ENCODE measurements at regions of chr1 and their contacts with region 1.

Region 1: DNA sequence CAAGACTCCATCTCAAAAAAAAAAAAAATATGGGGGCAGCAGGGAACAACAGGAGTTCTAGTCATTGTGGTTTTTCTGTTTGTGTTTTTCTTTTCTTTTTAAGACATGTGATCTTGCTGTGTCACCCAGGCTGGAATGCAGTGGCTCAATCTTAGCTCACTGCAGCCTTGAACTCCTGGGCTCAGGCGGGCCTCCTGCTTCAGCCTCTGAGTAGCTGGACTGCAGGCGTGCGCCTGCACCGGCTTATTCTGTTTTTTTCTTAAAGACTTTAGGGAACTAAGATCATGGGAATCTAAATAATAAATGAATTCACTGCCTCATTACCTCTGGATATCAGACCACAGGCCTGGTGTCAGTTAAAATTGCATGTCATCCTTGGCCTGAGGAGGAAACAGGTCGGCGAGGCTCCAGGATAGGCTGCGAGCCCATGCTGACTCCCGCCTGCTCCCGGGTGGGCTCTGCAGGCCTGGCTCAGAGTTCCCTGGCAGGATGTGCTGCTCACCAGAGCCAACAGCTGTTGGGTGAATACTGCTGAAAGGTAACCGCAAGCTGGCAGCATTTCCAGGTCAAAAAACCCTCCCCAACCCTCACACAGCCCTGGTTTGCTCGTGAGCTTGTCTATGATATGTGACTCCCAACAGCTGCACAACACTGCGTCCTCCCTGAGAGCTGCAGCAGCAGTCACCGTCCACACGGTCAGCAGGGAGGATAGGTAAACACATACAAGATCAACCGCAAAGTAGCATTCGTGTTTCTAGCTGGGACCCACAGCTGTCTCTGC is 58.1 kb downstream of the SCCPDH start:
- DNase-seq: peak in 2 of 9 donors; percentile 4 to 20
- ATAC-seq: peak; percentile 52
- H3K4me3 ChIP-seq: no peak overlapping the region
- H3K4me3 Mint-ChIP-seq: peak overlapping the region in 8 of 10 donors; percentile 1 to 65 (median 34)
- H3K27ac ChIP-seq: no peak overlapping the region
- H3K27ac Mint-ChIP-seq: peak overlapping the region in 4 of 9 donors; percentile 15 to 71 (median 56)
- H3K4me1 ChIP-seq: peaks cover 0 to 6% of the 10 kb centered on the region in 2 donors
- H3K4me1 Mint-ChIP-seq: peaks cover 6 to 31% (median 22%) of the 10 kb centered on the region in 7 donors
- H3K27me3 ChIP-seq: no peaks in the 10 kb centered on the region
- H3K27me3 Mint-ChIP-seq: peaks cover 0 to 9% (median 0%) of the 10 kb centered on the region in 5 donors

Region 2: DNA sequence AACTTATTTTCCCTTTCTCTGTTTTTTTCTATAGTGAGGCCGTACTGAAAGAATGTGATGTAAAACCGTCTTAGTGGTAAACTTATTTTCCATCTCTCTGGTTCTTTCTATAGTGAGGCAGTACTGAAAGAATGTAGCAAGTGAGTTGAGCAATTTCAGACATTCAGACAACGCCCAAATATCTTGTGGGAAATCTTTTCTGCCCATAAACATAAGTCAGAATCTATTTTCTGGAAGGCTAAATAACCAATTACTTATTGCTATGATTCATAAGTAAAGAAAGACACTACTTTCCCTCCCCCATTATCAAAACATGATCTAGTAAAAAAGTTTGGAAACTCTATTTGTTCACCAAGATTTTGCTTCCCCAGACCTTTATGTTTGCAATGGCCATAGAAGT is 76.9 kb before region 1 on chr1:
- CTCF ChIA-PET with region 1: no interaction called
- POLR2A ChIA-PET with region 1: no interaction called
- intact Hi-C with region 1: loop called in 1 of 2 experiments (anchors 2 kb)
- DNase-seq: no peak
- ATAC-seq: no peak
- H3K4me3 ChIP-seq: no peak overlapping the region
- H3K4me3 Mint-ChIP-seq: no peak overlapping the region
- H3K27ac ChIP-seq: no peak overlapping the region
- H3K27ac Mint-ChIP-seq: no peak overlapping the region
- H3K4me1 ChIP-seq: no peaks in the 10 kb centered on the region
- H3K4me1 Mint-ChIP-seq: peaks cover 0 to 10% (median 3%) of the 10 kb centered on the region in 7 donors
- H3K27me3 ChIP-seq: no peaks in the 10 kb centered on the region
- H3K27me3 Mint-ChIP-seq: peaks cover 0 to 10% (median 5%) of the 10 kb centered on the region in 5 donors

Region 3: DNA sequence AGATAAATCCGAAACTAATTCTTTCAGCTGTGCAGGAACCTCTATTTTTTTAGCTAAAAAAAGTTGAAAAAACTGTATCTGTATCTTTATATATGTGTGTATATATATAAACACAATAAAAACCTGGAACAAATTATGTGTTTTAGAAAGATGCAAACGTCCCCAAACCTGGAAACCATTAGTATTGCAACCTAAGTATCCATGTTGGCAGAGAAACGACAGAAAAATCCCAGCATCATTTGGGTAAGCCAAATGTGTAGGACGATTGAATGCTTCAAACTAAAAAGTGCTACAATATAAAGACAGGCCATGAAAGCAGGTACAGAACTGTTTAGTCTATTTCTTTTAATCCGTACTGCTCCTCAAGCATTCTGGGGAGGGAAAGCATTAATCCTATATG is 61.6 kb after region 1 on chr1:
- CTCF ChIA-PET with region 1: no interaction called
- POLR2A ChIA-PET with region 1: no interaction called
- intact Hi-C with region 1: loop called in 1 of 2 experiments (anchors 10 kb)
- DNase-seq: no peak
- ATAC-seq: no peak
- H3K4me3 ChIP-seq: no peak overlapping the region
- H3K4me3 Mint-ChIP-seq: no peak overlapping the region
- H3K27ac ChIP-seq: no peak overlapping the region
- H3K27ac Mint-ChIP-seq: no peak overlapping the region
- H3K4me1 ChIP-seq: no peaks in the 10 kb centered on the region
- H3K4me1 Mint-ChIP-seq: peaks cover 0 to 5% (median 0%) of the 10 kb centered on the region in 7 donors
- H3K27me3 ChIP-seq: no peaks in the 10 kb centered on the region
- H3K27me3 Mint-ChIP-seq: no peaks in the 10 kb centered on the region